Endothelial cell of umbilical vein (primary cell): ENCODE measurements at regions of chr3 and their contacts with region 1.

Region 1: GRCh38 chr3:8769088-8769822 is at the start of gene OXTR:
- DNase-seq: peak; percentile 69
- H3K4me3 ChIP-seq: peak within 1 kb of the TSS in 1 of 3 experiments; percentile 9
- H3K27ac ChIP-seq: no peak within 1 kb of the TSS
- H3K4me1 ChIP-seq: peaks cover 16% of the 10 kb centered on the region
- H3K27me3 ChIP-seq: peaks cover 24 to 28% of the 10 kb centered on the region in 2 experiments
- CTCF ChIP-seq: peak; percentile 99
- POLR2A ChIP-seq: no peak
- total RNA-seq, gene OXTR: 0.40 and 0.67 TPM in 2 replicates

Region 2: GRCh38 chr3:8593026-8593827 is 176.0 kb before region 1 on chr3:
- CTCF ChIA-PET with region 1: no interaction called
- POLR2A ChIA-PET with region 1: no interaction called
- dilution Hi-C with region 1: no loop called
- intact Hi-C with region 1: no loop called
- DNase-seq: no peak
- H3K4me3 ChIP-seq: no peak overlapping the region
- H3K27ac ChIP-seq: no peak overlapping the region
- H3K4me1 ChIP-seq: no peaks in the 10 kb centered on the region
- H3K27me3 ChIP-seq: no peaks in the 10 kb centered on the region
- CTCF ChIP-seq: no peak
- POLR2A ChIP-seq: no peak

Region 3: GRCh38 chr3:8741581-8742261 is 27.5 kb before region 1 on chr3:
- CTCF ChIA-PET with region 1: interaction called, 13 read pairs
- POLR2A ChIA-PET with region 1: no interaction called
- dilution Hi-C with region 1: no loop called
- intact Hi-C with region 1: no loop called
- DNase-seq: peak; percentile 66
- H3K4me3 ChIP-seq: no peak overlapping the region
- H3K27ac ChIP-seq: no peak overlapping the region
- H3K4me1 ChIP-seq: peaks cover 12% of the 10 kb centered on the region
- H3K27me3 ChIP-seq: no peaks in the 10 kb centered on the region
- CTCF ChIP-seq: no peak
- POLR2A ChIP-seq: no peak

Region 4: DNA sequence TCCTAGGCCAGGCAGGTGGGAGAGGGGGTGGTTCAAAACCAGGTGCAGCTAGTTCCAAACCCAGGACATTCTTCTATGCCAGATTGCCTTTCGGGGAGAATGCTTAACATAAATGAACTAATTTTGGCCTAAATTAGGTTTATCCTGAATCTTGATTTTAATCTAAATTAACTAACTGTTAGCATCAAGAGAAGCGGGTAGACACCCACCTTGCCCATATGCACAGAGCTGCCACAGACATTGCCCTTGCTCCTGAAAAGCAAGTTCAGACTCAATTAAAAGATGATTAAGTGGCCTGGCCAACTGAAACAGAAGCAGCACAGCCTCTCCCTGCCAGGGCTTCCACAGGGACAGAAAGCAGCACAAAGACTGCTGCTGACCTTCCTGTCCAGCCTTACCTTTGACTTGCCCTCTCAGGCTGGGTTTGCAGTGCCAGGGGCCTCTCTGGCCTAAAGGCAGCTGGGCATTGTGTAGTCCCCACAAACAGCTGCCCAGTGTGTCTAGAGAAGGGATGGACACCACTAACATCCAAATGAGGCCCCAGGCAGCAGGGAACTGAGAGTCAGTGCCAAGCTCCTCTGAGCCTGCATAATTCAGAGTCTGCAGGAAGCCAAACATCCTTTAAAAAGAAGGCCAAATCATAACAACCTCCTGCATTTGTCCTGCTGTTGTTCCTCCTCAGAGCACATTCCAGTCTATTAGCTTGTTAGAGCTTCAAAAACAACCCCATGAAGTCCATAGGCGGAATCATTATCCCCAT is 15.6 kb after region 1 on chr3:
- CTCF ChIA-PET with region 1: interaction called, 22 read pairs
- POLR2A ChIA-PET with region 1: no interaction called
- dilution Hi-C with region 1: no loop called
- intact Hi-C with region 1: no loop called
- DNase-seq: peak; percentile 41
- H3K4me3 ChIP-seq: no peak overlapping the region
- H3K27ac ChIP-seq: no peak overlapping the region
- H3K4me1 ChIP-seq: no peaks in the 10 kb centered on the region
- H3K27me3 ChIP-seq: no peaks in the 10 kb centered on the region
- CTCF ChIP-seq: no peak
- POLR2A ChIP-seq: no peak

Region 5: GRCh38 chr3:8938021-8938420 is 168.8 kb after region 1 on chr3:
- CTCF ChIA-PET with region 1: interaction called, 11 read pairs
- POLR2A ChIA-PET with region 1: no interaction called
- dilution Hi-C with region 1: no loop called
- intact Hi-C with region 1: loop called (anchors 1 kb)
- DNase-seq: peak; percentile 61
- H3K4me3 ChIP-seq: no peak overlapping the region
- H3K27ac ChIP-seq: peak overlapping the region; percentile 87
- H3K4me1 ChIP-seq: peaks cover 21% of the 10 kb centered on the region
- H3K27me3 ChIP-seq: no peaks in the 10 kb centered on the region
- CTCF ChIP-seq: peak; percentile 19 to 32
- POLR2A ChIP-seq: no peak

Region 6: GRCh38 chr3:9067352-9067975 is 298.2 kb after region 1 on chr3:
- CTCF ChIA-PET with region 1: interaction called, 14 read pairs
- POLR2A ChIA-PET with region 1: no interaction called
- dilution Hi-C with region 1: no loop called
- intact Hi-C with region 1: loop called (anchors 1 kb)
- DNase-seq: peak; percentile 61
- H3K4me3 ChIP-seq: no peak overlapping the region
- H3K27ac ChIP-seq: no peak overlapping the region
- H3K4me1 ChIP-seq: no peaks in the 10 kb centered on the region
- H3K27me3 ChIP-seq: no peaks in the 10 kb centered on the region
- CTCF ChIP-seq: peak; percentile 78
- POLR2A ChIP-seq: no peak